Mucosa of descending colon (tissue), 3 donors: ENCODE measurements at regions of chr1 and their contacts with region 1.

Region 1: DNA sequence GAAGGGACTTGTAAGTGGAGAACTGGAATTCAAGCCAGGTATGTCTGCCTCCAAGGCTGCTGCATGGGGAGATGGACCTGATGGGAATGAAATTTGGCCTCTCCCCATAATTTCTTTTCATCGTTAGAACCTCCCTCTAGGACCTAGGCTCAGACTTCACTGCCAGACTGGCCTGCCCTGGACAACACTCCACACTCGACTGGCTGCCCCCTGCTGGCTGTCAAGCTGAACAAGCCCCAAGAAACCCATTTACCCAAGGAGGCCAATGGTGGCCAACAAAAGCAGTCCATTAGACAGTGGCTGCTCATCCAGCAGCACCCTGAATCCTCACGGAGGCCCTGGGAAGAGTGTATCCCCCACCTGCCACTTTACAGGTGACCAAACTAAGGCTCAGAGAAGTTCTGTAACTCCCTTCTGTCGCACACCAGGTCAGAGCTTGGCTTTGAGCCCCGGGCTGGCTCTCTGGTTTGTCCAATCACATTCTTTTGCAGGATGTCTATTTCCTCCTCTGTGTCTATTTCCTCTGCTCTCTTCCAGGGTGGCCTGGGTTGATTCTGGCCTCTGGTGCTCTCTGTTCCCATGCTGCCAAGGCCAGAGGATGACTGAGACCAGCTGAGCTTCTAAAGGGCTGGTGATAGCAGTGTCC is 3.8 kb downstream of the RNF186 start:
- DNase-seq: peak; percentile 56 to 73 (median 61)
- ATAC-seq: no peak
- H3K4me3 ChIP-seq: no peak overlapping the region
- H3K4me1 ChIP-seq: peaks cover 8% of the 10 kb centered on the region
- CTCF ChIP-seq: peak; percentile 24

Region 2: DNA sequence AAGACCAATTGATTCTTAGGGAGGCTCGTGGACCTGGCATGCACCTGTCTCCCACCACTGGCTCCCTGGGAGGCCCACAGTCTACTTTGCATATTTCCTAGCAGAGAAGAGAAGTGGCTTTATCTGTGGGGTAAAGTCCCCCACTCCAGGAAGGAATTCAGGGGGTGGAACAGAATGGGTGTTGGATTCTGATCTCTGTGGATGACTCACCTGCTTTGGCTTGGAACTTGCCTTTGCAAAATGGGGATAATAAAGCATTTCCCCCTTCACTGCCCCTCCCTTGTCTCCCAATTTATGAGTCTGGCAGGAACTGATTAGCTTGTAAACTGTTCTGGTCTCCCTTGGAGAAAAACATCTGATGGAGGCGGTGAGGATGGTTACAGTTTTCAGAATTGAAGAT is 49.7 kb after region 1 on chr1:
- intact Hi-C with region 1: loop called in 1 of 2 experiments (anchors 10 kb)
- DNase-seq: peak in 1 of 3 donors; percentile 58
- ATAC-seq: peak; percentile 92
- H3K4me3 ChIP-seq: no peak overlapping the region
- H3K4me1 ChIP-seq: peaks cover 10% of the 10 kb centered on the region
- CTCF ChIP-seq: no peak

Region 3: DNA sequence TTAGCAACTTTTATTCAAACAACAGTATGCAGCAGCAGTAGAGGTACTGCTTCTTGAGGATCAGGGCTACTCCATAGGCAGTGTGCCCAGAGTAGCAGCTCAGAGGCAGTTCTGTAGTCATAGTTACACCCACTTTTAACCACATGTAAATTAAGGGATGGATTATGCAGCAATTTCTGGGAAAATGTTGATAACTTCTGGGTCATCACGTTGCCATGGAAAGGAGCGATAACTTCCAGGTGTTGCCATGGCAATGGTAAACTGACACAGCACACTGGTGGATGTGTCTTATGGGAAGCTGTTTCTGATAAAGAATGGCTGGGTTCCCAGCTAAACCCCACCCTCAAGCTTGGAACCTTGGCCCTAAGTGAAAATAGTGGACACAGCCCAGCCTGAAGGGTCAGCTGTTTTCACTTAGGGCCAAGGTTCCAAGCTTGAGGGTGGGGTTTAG is 197.1 kb after region 1 on chr1:
- intact Hi-C with region 1: no loop called
- DNase-seq: no peak
- ATAC-seq: peak; percentile 86
- H3K4me3 ChIP-seq: no peak overlapping the region
- H3K4me1 ChIP-seq: no peaks in the 10 kb centered on the region
- CTCF ChIP-seq: no peak